ENCODE measurements at regions of chr12 and their contacts with region 1.

Region 1: GRCh38 chr12:41023836-41024235 is 164.3 kb upstream of the PDZRN4 start:
- DNase-seq: no peak
- H3K4me3 ChIP-seq: no peak overlapping the region
- H3K27ac ChIP-seq: no peak overlapping the region
- H3K4me1 ChIP-seq: no peaks in the 10 kb centered on the region
- H3K27me3 ChIP-seq: no peaks in the 10 kb centered on the region
- CTCF ChIP-seq: no peak

Region 2: GRCh38 chr12:40969796-40970195 is 54.0 kb before region 1 on chr12:
- CTCF ChIA-PET with region 1: no interaction called
- POLR2A ChIA-PET with region 1: no interaction called
- intact Hi-C with region 1: loop called (anchors 10 kb)
- DNase-seq: no peak
- H3K4me3 ChIP-seq: no peak overlapping the region
- H3K27ac ChIP-seq: no peak overlapping the region
- H3K4me1 ChIP-seq: no peaks in the 10 kb centered on the region
- H3K27me3 ChIP-seq: no peaks in the 10 kb centered on the region
- CTCF ChIP-seq: no peak

Region 3: DNA sequence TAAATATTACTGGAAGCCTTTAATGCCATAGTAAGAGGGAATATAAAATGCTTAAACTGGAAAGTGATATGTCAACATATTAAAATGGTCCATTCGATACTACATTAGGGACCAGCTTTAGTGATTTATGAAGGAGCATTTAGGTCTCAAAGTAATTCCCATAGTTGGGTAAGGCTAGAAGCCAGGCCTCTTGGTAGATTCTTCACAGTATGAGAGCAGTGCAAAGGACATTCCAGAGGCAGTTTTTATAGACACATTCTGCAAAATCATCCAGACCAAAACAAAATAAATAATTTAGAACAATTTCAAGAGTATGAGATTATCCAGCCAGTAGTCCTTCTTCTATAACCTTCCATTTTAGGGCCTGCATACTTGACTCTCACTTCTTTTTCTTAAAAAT is 21.7 kb after region 1 on chr12:
- CTCF ChIA-PET with region 1: no interaction called
- POLR2A ChIA-PET with region 1: no interaction called
- intact Hi-C with region 1: no loop called
- DNase-seq: no peak
- H3K4me3 ChIP-seq: no peak overlapping the region
- H3K27ac ChIP-seq: no peak overlapping the region
- H3K4me1 ChIP-seq: no peaks in the 10 kb centered on the region
- H3K27me3 ChIP-seq: no peaks in the 10 kb centered on the region
- CTCF ChIP-seq: no peak